ENCODE measurements at regions of chr9 and their contacts with region 1.

Region 1: DNA sequence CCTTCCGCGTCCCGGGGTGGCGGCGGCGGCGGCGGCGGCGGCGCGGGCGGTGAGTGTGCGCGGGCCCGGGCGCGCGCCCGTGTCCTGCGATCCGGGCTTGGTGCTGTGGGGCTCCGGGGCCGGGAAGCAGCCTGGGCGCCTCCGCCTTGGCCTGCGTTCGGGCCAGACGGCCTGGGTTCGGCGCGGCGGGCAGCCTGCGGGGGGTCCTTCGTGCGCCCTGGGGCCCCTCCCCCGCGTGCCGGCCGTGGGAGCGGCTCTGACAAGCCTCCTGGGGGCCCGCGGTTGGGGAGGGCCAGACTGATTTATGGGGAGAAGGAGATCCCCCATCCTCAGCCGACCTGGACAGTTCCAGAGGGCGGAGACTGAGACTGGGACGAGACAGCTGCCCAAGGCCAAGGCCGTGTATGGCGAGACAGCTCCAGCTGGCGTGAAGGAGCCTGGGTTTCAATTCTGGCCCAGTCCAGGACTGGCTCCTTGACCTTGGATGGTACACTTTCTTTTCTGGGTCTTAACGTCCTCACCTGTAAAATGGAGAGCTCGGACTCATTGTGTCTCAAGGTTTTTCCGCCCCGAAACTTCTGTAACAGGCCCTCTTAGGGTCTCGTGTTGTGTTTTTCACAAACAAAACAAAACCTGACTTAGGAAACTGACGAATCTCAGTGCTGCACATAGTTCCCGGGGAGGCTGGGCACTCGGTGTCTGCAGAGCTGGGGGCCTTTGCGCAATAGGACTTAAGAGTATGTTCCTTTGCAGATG is 603 bp downstream of the TMEM268 start:
- DNase-seq: peak; percentile 49
- ATAC-seq: peak; percentile 68
- H3K4me3 Mint-ChIP-seq: peak overlapping the region; percentile 70
- H3K27ac Mint-ChIP-seq: no peak overlapping the region
- H3K4me1 Mint-ChIP-seq: peaks cover 25% of the 10 kb centered on the region
- H3K27me3 Mint-ChIP-seq: peaks cover 22% of the 10 kb centered on the region
- CTCF ChIP-seq: no peak

Region 2: DNA sequence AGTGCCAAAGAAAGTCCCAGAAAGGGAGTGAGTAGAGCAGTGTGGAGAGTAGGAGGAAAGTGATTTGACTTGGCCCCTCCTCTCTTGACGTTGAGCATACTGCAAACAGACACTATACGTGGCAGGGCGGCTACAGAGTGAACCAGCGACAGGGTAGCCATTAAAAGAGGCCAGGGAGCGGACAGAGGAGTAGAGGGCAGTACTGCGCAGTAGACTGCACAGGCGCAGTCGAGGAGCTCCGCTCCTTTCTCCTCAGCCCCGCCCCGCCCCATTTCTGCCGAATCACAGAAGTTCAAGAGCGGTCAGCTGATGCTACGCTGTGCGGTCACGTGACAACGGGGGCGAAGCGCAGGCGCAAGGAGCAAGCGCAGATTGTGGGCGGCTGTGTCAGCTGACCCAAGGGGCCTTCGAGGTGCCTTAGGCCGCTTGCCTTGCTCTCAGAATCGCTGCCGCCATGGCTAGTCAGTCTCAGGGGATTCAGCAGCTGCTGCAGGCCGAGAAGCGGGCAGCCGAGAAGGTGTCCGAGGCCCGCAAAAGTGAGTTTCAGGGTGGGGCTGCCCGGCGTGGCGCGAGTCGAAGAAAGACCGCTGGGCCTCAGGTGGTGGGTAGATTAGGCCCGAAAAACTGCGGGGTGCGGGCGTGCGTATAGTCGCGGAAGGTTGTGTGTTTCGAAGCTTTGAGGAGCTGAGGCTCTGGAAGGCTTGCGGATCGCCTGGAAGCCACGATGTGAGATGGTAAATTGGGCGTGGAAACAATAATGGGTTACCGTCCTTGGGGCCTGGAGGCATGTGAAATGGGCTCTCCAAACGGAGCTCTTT is 24.1 kb before region 1 on chr9 and contains the start of gene ATP6V1G1:
- CTCF ChIA-PET with region 1: interaction called, 5 read pairs
- POLR2A ChIA-PET with region 1: interaction called, 13 read pairs
- DNase-seq: peak; percentile 100
- ATAC-seq: peak; percentile 90
- H3K4me3 Mint-ChIP-seq: peak within 1 kb of the TSS; percentile 100
- H3K27ac Mint-ChIP-seq: peak within 1 kb of the TSS; percentile 94
- H3K4me1 Mint-ChIP-seq: peaks cover 52% of the 10 kb centered on the region
- H3K27me3 Mint-ChIP-seq: no peaks in the 10 kb centered on the region
- CTCF ChIP-seq: no peak
- total RNA-seq, gene ATP6V1G1: 91.3 to 108 TPM (median 92.4 TPM) in 3 replicates

Measured in WTC11 (cell line).